K562 (cell line): ENCODE measurements at regions of chr9 and their contacts with region 1.

Region 1: DNA sequence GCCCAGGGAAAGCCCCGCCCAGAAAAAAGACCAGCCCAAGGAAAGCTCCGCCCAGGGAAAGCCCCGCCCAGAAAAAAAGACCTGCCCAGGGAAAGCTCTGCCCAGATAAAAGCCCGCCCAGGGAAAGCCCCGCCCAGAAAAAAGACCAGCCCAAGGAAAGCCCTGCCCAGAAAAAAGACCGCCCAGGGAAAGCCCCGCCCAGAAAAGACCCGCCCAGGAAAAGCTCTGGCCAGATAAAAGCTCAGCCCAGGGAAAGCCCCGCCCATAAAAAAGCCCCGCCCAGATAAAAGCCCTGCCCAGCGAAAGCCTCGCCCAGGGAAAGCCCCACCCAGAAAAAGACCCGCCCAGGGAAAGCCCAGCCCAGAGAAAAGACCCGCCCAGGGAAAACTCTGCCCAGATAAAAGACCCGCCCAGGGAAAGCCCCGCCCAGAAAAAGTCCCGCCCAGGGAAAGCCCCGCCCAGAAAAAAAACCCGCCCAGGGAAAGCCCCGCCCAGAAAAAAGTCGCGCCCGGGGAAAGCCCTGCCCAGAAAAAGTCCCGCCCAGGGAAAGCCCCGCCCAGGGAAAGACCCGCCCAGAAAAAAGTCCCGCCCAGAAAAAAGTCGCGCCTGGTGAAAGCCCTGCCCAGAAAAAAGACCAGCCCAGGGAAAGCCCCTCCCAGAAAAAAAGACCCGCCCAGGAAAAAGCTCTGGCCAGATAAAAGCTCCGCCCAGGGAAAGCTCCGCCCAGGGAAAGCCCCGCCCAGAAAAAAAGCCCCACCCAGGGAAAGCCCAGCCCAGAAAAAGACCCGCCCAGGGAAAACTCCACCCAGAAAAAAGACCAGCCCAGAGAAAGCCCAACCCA is 11.9 kb downstream of the GRIN1 start:
- DNase-seq: peak; percentile 82 to 93 (median 88)
- ATAC-seq: peak; percentile 87
- H3K4me3 ChIP-seq: peak overlapping the region; percentile 21; the same call in 1 of the 2 replicates
- H3K27ac ChIP-seq: peak overlapping the region; percentile 52; the same call in 1 of the 3 replicates
- H3K4me1 ChIP-seq: peaks cover 8 to 53% of the 10 kb centered on the region in 2 experiments; a peak in 3 of 5 replicates
- H3K27me3 ChIP-seq: no peaks in the 10 kb centered on the region
- CTCF ChIP-seq: no peak
- EP300 ChIP-seq: no peak
- POLR2A ChIP-seq: no peak
- RAD21 ChIP-seq: no peak

Region 2: GRCh38 chr9:137086531-137087408 is 64.1 kb before region 1 on chr9 and contains the start of gene MAN1B1:
- CTCF ChIA-PET with region 1: no interaction called
- POLR2A ChIA-PET with region 1: no interaction called
- in situ Hi-C with region 1: no loop called
- intact Hi-C with region 1: loop called (anchors 2 kb)
- DNase-seq: peak; percentile 95 to 100 (median 96)
- ATAC-seq: peak; percentile 89
- H3K4me3 ChIP-seq: peak within 1 kb of the TSS; percentile 79
- H3K27ac ChIP-seq: peak within 1 kb of the TSS; percentile 87
- H3K4me1 ChIP-seq: peaks cover 32 to 64% of the 10 kb centered on the region in 2 experiments; a peak in 4 of 5 replicates
- H3K27me3 ChIP-seq: no peaks in the 10 kb centered on the region
- CTCF ChIP-seq: peak in 1 of 3 experiments; percentile 5; a peak in 2 of 6 replicates
- EP300 ChIP-seq: no peak; the same call in 1 of the 2 replicates
- POLR2A ChIP-seq: peak; percentile 82
- RAD21 ChIP-seq: no peak
- polyA plus RNA-seq, gene MAN1B1: 0.55 to 0.89 TPM

Region 3: GRCh38 chr9:137129456-137130175 is 21.2 kb before region 1 on chr9:
- CTCF ChIA-PET with region 1: no interaction called
- POLR2A ChIA-PET with region 1: interaction called, 13 read pairs
- in situ Hi-C with region 1: no loop called
- intact Hi-C with region 1: loop called (anchors 2 kb)
- DNase-seq: peak; percentile 88 to 97 (median 90)
- ATAC-seq: peak; percentile 95
- H3K4me3 ChIP-seq: peak overlapping the region; percentile 91
- H3K27ac ChIP-seq: peak overlapping the region; percentile 78
- H3K4me1 ChIP-seq: peaks cover 12 to 37% of the 10 kb centered on the region in 2 experiments; a peak in 4 of 5 replicates
- H3K27me3 ChIP-seq: no peaks in the 10 kb centered on the region
- CTCF ChIP-seq: peak in 1 of 3 experiments; percentile 20; a peak in 2 of 6 replicates
- EP300 ChIP-seq: no peak
- POLR2A ChIP-seq: peak; percentile 88
- RAD21 ChIP-seq: no peak

Region 4: GRCh38 chr9:137138722-137139467 is 11.9 kb before region 1 on chr9 and contains the start of gene GRIN1:
- CTCF ChIA-PET with region 1: no interaction called
- POLR2A ChIA-PET with region 1: interaction called, 22 read pairs
- in situ Hi-C with region 1: no loop called
- intact Hi-C with region 1: no loop called
- DNase-seq: peak; percentile 65 to 84 (median 74)
- ATAC-seq: peak; percentile 84
- H3K4me3 ChIP-seq: no peak within 1 kb of the TSS
- H3K27ac ChIP-seq: no peak within 1 kb of the TSS
- H3K4me1 ChIP-seq: peaks cover 0 to 52% of the 10 kb centered on the region in 2 experiments; a peak in 2 of 5 replicates
- H3K27me3 ChIP-seq: peaks cover 43 to 83% of the 10 kb centered on the region in 2 experiments; a peak in 4 of 5 replicates
- CTCF ChIP-seq: no peak
- EP300 ChIP-seq: no peak
- POLR2A ChIP-seq: no peak
- RAD21 ChIP-seq: no peak
- polyA plus RNA-seq, gene GRIN1: not detected

Region 5: DNA sequence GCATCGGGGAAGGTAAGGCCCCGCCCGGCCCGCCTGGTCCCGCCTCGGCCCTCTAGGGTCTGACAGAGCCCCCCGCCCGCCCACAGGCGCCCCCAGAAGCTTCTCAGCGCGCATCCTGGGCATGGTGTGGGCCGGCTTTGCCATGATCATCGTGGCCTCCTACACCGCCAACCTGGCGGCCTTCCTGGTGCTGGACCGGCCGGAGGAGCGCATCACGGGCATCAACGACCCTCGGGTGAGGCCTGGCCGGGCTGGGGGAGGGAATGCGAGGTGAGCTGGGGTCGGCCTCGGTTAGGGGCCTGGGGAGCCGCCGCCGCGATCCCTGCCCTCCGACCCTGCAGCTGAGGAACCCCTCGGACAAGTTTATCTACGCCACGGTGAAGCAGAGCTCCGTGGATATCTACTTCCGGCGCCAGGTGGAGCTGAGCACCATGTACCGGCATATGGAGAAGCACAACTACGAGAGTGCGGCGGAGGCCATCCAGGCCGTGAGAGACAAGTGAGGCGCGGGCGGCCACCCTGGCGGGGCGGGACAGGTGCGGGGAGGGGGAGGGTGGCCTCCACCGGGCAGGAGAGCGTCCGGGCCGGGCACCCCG is 11.8 kb after region 1 on chr9:
- CTCF ChIA-PET with region 1: no interaction called
- POLR2A ChIA-PET with region 1: no interaction called
- in situ Hi-C with region 1: no loop called
- intact Hi-C with region 1: no loop called
- DNase-seq: peak in 2 of 4 experiments; percentile 13 to 34
- ATAC-seq: peak; percentile 32
- H3K4me3 ChIP-seq: no peak overlapping the region
- H3K27ac ChIP-seq: no peak overlapping the region
- H3K4me1 ChIP-seq: peaks cover 13 to 97% of the 10 kb centered on the region in 2 experiments; a peak in 4 of 5 replicates
- H3K27me3 ChIP-seq: peaks cover 15 to 29% of the 10 kb centered on the region in 2 experiments; a peak in 4 of 5 replicates
- CTCF ChIP-seq: peak in 1 of 3 experiments; percentile 20; a peak in 1 of 6 replicates
- EP300 ChIP-seq: no peak
- POLR2A ChIP-seq: no peak
- RAD21 ChIP-seq: no peak